ENCODE measurements at regions of chr12 and their contacts with region 1.

Region 1: GRCh38 chr12:68871921-68872320 is 61.0 kb downstream of the CPM start:
- DNase-seq: peak; percentile 28
- ATAC-seq: peak; percentile 40; the same call in 1 of the 2 replicates
- H3K4me3 ChIP-seq: no peak overlapping the region
- H3K27ac ChIP-seq: no peak overlapping the region
- H3K4me1 ChIP-seq: no peaks in the 10 kb centered on the region
- H3K27me3 ChIP-seq: no peaks in the 10 kb centered on the region; the same call in 1 of the 2 replicates
- CTCF ChIP-seq: peak; percentile 33; the same call in 1 of the 2 replicates
- POLR2A ChIP-seq: no peak
- RAD21 ChIP-seq: peak; percentile 47

Region 2: GRCh38 chr12:68915055-68915454 is 43.1 kb after region 1 on chr12:
- CTCF ChIA-PET with region 1: no interaction called
- POLR2A ChIA-PET with region 1: no interaction called
- dilution Hi-C with region 1: no loop called
- in situ Hi-C with region 1: no loop called
- intact Hi-C with region 1: no loop called
- DNase-seq: peak; percentile 87
- ATAC-seq: peak; percentile 51
- H3K4me3 ChIP-seq: no peak overlapping the region
- H3K27ac ChIP-seq: no peak overlapping the region
- H3K4me1 ChIP-seq: 0 out of 2 replicates have a peak, but pooled peaks cover 3% of the 10 kb centered on the region
- H3K27me3 ChIP-seq: no peaks in the 10 kb centered on the region
- CTCF ChIP-seq: no peak
- POLR2A ChIP-seq: no peak
- RAD21 ChIP-seq: no peak

Region 3: GRCh38 chr12:69239922-69240630 is 368.2 kb after region 1 on chr12:
- CTCF ChIA-PET with region 1: no interaction called
- POLR2A ChIA-PET with region 1: no interaction called
- dilution Hi-C with region 1: no loop called
- in situ Hi-C with region 1: loop called (anchors 10 kb)
- intact Hi-C with region 1: no loop called
- DNase-seq: peak; percentile 15
- ATAC-seq: peak; percentile 61
- H3K4me3 ChIP-seq: peak overlapping the region; percentile 92
- H3K27ac ChIP-seq: peak overlapping the region; percentile 75
- H3K4me1 ChIP-seq: peaks cover 5% of the 10 kb centered on the region
- H3K27me3 ChIP-seq: no peaks in the 10 kb centered on the region
- CTCF ChIP-seq: no peak
- POLR2A ChIP-seq: no peak
- RAD21 ChIP-seq: no peak